Activated naive CD4-positive, alpha-beta T cell treated with anti-CD3 and anti-CD28 coated beads for 36 hours (primary cell): ENCODE measurements at regions of chr10 and their contacts with region 1.

Region 1: GRCh38 chr10:30639946-30640786 is 10.6 kb upstream of the LYZL2 start:
- DNase-seq: peak; percentile 28
- H3K4me3 Mint-ChIP-seq: no peak overlapping the region
- H3K27ac Mint-ChIP-seq: no peak overlapping the region
- H3K4me1 Mint-ChIP-seq: peaks cover 3% of the 10 kb centered on the region
- H3K27me3 Mint-ChIP-seq: peaks cover 26% of the 10 kb centered on the region

Region 2: DNA sequence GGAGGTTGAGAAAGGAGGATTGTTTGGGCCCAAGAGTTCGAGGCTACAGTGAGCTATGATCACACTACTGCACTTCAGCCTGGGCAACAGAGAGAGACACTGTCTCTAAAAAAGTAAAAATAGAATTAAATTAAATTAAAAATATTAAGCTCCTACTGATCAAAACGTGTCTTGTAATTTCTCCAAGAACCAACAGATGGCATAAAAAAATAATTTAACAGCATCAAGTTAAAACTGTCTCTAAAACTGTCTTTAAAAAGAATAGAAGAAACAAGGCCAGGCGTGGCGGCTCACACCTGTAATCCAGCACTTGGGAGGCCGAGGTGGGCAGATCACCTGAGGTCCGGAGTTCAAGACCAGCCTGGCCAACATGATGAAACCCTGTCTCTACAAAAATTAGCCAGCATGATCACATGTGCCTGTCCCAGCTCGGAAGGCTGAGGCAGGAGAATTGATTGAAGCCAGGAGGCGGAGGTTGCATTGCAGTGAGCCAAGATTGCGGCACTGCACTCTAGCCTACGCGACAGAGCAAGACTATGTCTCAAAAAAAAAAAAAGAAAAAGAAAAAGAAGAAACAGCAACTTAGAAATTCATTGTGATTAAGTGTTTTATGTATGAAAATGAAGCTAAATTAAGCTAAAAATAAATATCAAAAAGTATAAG is 315.6 kb before region 1 on chr10:
- CTCF ChIA-PET with region 1: no interaction called
- intact Hi-C with region 1: no loop called
- DNase-seq: no peak
- H3K4me3 Mint-ChIP-seq: no peak overlapping the region
- H3K27ac Mint-ChIP-seq: no peak overlapping the region
- H3K4me1 Mint-ChIP-seq: no peaks in the 10 kb centered on the region
- H3K27me3 Mint-ChIP-seq: no peaks in the 10 kb centered on the region

Region 3: DNA sequence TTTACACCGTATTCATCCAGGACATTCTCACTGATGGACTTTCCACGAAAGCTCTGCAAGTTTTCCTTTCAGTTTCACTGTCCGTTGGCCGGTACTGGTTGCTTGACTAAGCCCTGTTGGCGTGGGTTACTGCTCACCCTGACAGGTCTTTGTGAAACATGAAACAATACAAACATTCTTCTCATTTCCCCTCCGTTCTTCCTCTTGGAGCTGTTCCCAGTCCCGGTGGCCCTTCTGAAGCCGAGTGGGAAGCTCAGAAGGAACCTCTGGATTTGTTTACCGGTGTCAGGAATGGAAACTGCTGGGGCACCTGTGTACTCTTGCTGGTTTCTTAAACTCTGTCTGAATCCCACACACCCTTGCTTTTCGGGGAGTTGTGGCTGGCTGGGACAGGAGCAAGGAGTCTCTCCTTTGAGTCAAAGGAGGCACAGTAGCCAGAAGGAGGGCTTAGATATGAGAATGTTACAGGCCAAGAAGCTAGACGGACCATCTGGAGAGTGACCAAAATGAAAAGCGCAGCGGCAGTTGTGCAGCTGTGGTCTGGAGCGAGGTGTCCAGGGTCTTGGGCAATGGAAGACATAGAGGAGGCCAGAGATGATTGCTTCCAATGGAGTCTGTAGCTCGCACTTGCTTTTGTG is 56.3 kb before region 1 on chr10:
- CTCF ChIA-PET with region 1: interaction called, 10 read pairs
- intact Hi-C with region 1: no loop called
- DNase-seq: no peak
- H3K4me3 Mint-ChIP-seq: no peak overlapping the region
- H3K27ac Mint-ChIP-seq: no peak overlapping the region
- H3K4me1 Mint-ChIP-seq: peaks cover 3% of the 10 kb centered on the region
- H3K27me3 Mint-ChIP-seq: no peaks in the 10 kb centered on the region

Region 4: DNA sequence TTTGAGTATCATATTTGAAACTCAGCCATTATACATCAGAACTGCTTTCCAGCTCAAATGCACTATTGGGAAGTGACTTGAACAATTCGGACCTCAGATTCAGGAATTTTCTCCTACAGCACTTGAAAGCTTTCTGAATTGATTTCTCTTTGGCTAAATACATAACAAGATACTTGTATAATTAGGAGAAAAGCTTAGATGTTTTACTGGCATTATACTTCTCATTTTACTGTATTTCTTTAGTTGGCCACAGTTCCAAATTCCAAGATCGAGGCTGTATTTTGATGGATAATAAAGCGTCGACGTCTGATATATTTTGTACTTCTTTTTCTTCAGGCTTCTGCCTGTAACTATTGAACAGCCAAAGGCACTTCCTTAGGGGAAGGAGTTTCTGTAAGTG is 16.1 kb after region 1 on chr10:
- CTCF ChIA-PET with region 1: interaction called, 10 read pairs
- intact Hi-C with region 1: no loop called
- DNase-seq: no peak
- H3K4me3 Mint-ChIP-seq: no peak overlapping the region
- H3K27ac Mint-ChIP-seq: no peak overlapping the region
- H3K4me1 Mint-ChIP-seq: no peaks in the 10 kb centered on the region
- H3K27me3 Mint-ChIP-seq: peaks cover 17% of the 10 kb centered on the region